Heart right ventricle (tissue), 16 donors: ENCODE measurements at regions of chr12 and their contacts with region 1.

Region 1: GRCh38 chr12:109518820-109519665 is 41.6 kb downstream of the UBE3B start:
- DNase-seq: peak; percentile 61 to 76
- ATAC-seq: peak in 7 of 8 donors; percentile 29 to 83 (median 69)
- H3K4me3 ChIP-seq: no peak overlapping the region
- H3K27ac ChIP-seq: peak overlapping the region in 9 of 10 donors; percentile 62 to 93 (median 82)
- H3K4me1 ChIP-seq: peaks cover 9 to 56% (median 37%) of the 10 kb centered on the region in 9 donors
- H3K27me3 ChIP-seq: no peaks in the 10 kb centered on the region
- CTCF ChIP-seq: peak; percentile 76 to 92 (median 90)

Region 2: GRCh38 chr12:109592905-109593272 is 73.8 kb after region 1 on chr12:
- intact Hi-C with region 1: loop called in 5 of 10 experiments (anchors 5 kb)
- DNase-seq: no peak
- ATAC-seq: peak in 7 of 8 donors; percentile 18 to 57 (median 54)
- H3K4me3 ChIP-seq: no peak overlapping the region
- H3K27ac ChIP-seq: peak overlapping the region in 8 of 10 donors; percentile 5 to 78 (median 62)
- H3K4me1 ChIP-seq: peaks cover 0 to 22% (median 7%) of the 10 kb centered on the region in 9 donors
- H3K27me3 ChIP-seq: no peaks in the 10 kb centered on the region
- CTCF ChIP-seq: no peak

Region 3: GRCh38 chr12:109713187-109713984 is 194.3 kb after region 1 on chr12 and contains the start of gene FAM222A:
- intact Hi-C with region 1: loop called in 1 of 10 experiments (anchors 2 kb)
- DNase-seq: peak; percentile 97 to 99
- ATAC-seq: peak; percentile 91 to 98 (median 97)
- H3K4me3 ChIP-seq: peak within 1 kb of the TSS; percentile 47 to 74 (median 70)
- H3K27ac ChIP-seq: peak within 1 kb of the TSS in 9 of 10 donors; percentile 40 to 85 (median 73)
- H3K4me1 ChIP-seq: peaks cover 5 to 57% (median 35%) of the 10 kb centered on the region in 9 donors
- H3K27me3 ChIP-seq: peaks cover 0 to 72% (median 21%) of the 10 kb centered on the region in 7 donors
- CTCF ChIP-seq: peak in 3 of 9 donors; percentile 15 to 44 (median 17)
- total RNA-seq, gene FAM222A: 3.4 to 26.0 (median 8.6) TPM

Region 4: DNA sequence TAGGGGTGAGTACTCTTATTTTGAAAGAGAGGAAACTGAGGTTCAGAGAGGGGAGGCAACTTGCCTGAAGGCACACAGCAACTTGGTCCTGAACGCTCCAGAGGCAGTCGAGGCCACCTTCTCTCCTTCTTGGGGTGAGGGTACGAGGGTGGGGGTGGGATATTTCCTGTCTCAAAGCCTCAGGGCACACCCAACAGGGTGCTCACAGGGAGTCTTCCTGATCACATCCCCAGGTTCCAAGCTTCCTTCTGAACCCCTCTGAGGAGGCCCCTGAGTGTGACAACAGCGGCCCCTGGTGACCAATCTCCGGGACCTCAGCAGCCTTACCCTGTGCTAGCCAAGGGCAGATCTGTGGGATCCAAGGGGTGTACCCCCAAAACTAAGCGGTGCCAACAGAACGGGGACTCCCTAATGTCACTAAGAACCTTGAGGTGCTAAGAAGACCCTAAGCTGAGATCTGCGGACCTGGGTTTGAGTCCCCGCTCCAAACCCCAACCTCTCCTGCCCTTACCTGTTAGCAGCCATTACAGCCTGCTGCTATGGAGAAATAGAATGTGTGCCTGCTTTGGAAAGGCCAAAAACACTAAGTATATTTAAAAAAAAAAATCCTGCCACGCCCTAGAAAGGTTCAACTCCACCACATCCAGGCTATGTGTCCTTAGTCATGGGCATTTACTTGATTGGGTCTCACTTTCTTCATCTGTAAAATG is 256.3 kb after region 1 on chr12:
- intact Hi-C with region 1: loop called (anchors 1 to 5 kb)
- DNase-seq: peak; percentile 73 to 79
- ATAC-seq: peak; percentile 76 to 92 (median 85)
- H3K4me3 ChIP-seq: no peak overlapping the region
- H3K27ac ChIP-seq: no peak overlapping the region
- H3K4me1 ChIP-seq: peaks cover 0 to 12% (median 6%) of the 10 kb centered on the region in 9 donors
- H3K27me3 ChIP-seq: no peaks in the 10 kb centered on the region
- CTCF ChIP-seq: peak; percentile 78 to 94 (median 87)